ENCODE measurements at regions of chr11 and their contacts with region 1.

Region 1: DNA sequence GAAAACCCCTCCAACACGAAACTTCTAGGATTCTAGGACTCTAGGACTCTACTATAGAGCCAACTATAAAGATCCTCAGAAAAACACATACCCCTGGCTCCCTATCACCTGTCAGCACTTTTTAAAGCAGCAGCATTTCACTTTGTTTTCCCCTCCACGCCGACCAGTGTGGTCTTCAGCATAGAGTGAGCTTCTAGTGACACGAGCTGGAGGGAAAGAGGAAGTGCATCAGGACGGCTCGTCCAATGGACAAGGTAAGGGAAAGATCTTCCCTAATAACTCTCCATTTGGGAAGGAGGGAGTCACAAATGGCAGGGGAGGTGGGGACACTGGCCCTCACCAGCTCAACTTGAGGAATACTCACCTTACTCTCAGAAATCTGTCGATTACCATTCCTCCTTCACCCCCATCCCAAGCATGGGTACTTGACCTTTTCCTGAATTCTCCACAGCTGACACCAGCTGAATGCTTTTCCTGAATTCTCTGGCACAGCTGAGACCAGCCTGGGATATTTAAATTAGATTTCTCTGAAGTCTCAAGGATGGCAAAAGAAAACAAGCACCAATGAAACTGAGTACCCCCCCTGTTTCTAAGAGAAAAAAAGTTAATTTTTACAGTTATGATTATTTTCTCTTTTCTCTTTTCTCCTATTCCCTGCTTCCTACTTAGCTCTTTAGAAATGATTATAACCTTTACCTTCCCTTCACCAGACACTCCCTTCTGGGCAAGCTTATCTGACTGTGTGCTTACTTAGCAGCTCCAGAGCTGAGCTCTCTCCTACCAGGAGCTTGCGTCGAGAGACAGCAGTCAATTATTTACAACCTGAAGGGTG is 33.3 kb upstream of the NNMT start:
- DNase-seq: peak; percentile 17
- H3K4me3 Mint-ChIP-seq: no peak overlapping the region
- H3K27ac Mint-ChIP-seq: no peak overlapping the region
- H3K4me1 Mint-ChIP-seq: no peaks in the 10 kb centered on the region
- H3K27me3 Mint-ChIP-seq: no peaks in the 10 kb centered on the region

Region 2: DNA sequence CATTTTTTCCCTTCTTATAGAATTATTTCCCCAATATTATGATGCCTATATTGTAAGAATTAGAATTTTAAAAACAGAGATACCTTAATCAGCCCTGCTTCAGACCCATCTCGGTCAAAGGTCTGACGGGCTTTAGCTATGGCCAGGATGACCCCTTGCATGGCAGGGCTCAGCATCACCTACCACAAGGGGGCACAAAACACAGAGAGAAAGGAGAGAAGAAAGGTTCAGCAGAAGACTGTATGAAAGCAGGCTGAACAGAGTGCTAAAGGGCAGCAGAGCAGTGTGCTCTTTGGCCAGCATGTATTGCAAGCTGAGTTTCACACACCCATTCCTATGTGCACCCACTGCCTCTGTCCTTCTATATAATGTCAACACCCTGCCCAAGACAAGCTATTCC is 456.5 kb before region 1 on chr11:
- CTCF ChIA-PET with region 1: interaction called, 4 read pairs
- intact Hi-C with region 1: loop called (anchors 2 kb)
- DNase-seq: peak; percentile 9
- H3K4me3 Mint-ChIP-seq: no peak overlapping the region
- H3K27ac Mint-ChIP-seq: no peak overlapping the region
- H3K4me1 Mint-ChIP-seq: no peaks in the 10 kb centered on the region
- H3K27me3 Mint-ChIP-seq: no peaks in the 10 kb centered on the region

Region 3: DNA sequence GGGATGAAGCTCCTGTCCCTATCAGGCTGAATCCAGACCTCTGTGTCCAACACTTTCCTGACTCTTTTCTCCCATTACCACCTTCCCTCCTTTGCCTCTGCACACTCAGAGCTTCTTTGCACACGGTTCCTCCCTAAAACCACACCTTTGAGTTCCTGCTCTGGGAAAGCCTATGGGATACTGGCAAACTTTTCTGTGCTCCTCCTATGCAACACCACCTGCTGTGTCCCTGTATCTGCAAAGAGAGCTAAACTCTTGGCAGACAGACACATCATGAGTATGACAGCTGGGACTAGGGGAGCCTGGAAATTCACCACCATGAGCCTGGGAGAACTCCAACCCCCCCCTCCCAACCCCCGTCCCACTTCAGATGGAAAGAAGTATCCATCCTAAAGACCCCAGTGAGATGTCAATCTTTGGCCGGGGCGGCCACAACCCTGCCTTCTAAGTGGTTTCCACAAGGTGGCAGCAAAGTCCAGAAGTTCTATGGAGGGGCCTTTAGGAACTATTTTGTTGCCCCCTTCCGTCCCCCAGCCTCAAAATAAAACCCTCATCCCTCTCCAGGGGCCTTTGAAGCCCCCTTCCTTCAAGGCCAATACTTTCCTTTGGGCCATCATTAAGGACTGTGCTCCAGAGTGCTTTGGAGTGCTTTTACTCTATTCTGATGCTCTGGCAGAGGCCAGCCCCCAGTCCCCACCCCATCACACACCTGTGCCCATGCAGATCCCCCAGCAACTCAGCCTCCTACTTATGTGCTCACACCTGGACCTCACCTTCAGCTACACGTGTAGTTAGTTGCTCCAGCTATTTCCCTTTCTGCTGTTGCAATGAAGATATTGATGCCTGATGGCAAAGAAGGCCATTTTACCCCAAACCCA is 268.6 kb before region 1 on chr11:
- CTCF ChIA-PET with region 1: interaction called, 125 read pairs
- intact Hi-C with region 1: loop called (anchors 1 kb)
- DNase-seq: peak; percentile 42
- H3K4me3 Mint-ChIP-seq: no peak overlapping the region
- H3K27ac Mint-ChIP-seq: no peak overlapping the region
- H3K4me1 Mint-ChIP-seq: no peaks in the 10 kb centered on the region
- H3K27me3 Mint-ChIP-seq: peaks cover 21% of the 10 kb centered on the region

Region 4: GRCh38 chr11:114036156-114036811 is 226.6 kb before region 1 on chr11:
- CTCF ChIA-PET with region 1: interaction called, 74 read pairs
- intact Hi-C with region 1: loop called (anchors 1 kb)
- DNase-seq: peak; percentile 67
- H3K4me3 Mint-ChIP-seq: no peak overlapping the region
- H3K27ac Mint-ChIP-seq: no peak overlapping the region
- H3K4me1 Mint-ChIP-seq: peaks cover 2% of the 10 kb centered on the region
- H3K27me3 Mint-ChIP-seq: no peaks in the 10 kb centered on the region

Region 5: GRCh38 chr11:114180301-114181055 is 82.4 kb before region 1 on chr11:
- CTCF ChIA-PET with region 1: interaction called, 20 read pairs
- intact Hi-C with region 1: loop called (anchors 5 kb)
- DNase-seq: peak; percentile 53
- H3K4me3 Mint-ChIP-seq: no peak overlapping the region
- H3K27ac Mint-ChIP-seq: no peak overlapping the region
- H3K4me1 Mint-ChIP-seq: peaks cover 64% of the 10 kb centered on the region
- H3K27me3 Mint-ChIP-seq: no peaks in the 10 kb centered on the region

Region 6: GRCh38 chr11:114250993-114251814 is 11.7 kb before region 1 on chr11:
- CTCF ChIA-PET with region 1: interaction called, 25 read pairs
- intact Hi-C with region 1: no loop called
- DNase-seq: no peak
- H3K4me3 Mint-ChIP-seq: no peak overlapping the region
- H3K27ac Mint-ChIP-seq: no peak overlapping the region
- H3K4me1 Mint-ChIP-seq: no peaks in the 10 kb centered on the region
- H3K27me3 Mint-ChIP-seq: no peaks in the 10 kb centered on the region